Motor neuron (in vitro differentiated cells): ENCODE measurements at regions of chr4 and their contacts with region 1.

Region 1: DNA sequence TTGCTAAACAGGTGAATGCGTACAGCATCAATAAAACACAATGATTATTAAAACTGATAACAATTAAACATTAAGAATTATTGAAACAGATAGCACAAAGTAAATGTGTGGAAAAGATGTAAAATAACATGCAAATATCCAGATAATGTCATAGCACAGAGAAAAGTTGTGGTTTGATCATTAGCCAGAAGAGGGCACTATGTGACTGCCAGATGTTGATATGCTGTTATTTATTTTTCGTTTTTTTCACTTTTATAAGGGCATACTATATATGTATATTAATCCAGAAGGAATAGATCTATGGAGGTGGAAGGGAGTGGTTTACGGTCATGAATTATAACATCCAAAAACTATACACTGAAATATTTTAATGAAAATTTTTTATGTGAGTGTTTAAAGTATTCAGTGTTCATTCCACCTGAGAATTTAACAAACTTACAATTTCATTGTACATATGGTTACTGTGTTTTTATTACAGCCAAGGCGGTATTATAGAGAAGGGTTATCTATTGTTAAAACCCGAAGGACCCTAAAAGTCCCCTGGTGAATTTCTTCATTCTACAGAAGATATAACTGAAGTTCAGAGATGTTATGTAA is 211.9 kb upstream of the UGT8 start:
- ATAC-seq: peak in 4 of 8 experiments; percentile 30 to 55 (median 38)
- H3K4me3 ChIP-seq: no peak overlapping the region
- H3K27ac ChIP-seq: no peak overlapping the region
- H3K4me1 ChIP-seq: no peaks in the 10 kb centered on the region

Region 2: GRCh38 chr4:113781439-113782040 is 605.2 kb before region 1 on chr4:
- in situ Hi-C with region 1: loop called in 3 of 9 experiments (anchors 25 kb)
- ATAC-seq: peak in 3 of 8 experiments; percentile 33 to 42 (median 38)
- H3K4me3 ChIP-seq: no peak overlapping the region
- H3K27ac ChIP-seq: no peak overlapping the region
- H3K4me1 ChIP-seq: no peaks in the 10 kb centered on the region

Region 3: DNA sequence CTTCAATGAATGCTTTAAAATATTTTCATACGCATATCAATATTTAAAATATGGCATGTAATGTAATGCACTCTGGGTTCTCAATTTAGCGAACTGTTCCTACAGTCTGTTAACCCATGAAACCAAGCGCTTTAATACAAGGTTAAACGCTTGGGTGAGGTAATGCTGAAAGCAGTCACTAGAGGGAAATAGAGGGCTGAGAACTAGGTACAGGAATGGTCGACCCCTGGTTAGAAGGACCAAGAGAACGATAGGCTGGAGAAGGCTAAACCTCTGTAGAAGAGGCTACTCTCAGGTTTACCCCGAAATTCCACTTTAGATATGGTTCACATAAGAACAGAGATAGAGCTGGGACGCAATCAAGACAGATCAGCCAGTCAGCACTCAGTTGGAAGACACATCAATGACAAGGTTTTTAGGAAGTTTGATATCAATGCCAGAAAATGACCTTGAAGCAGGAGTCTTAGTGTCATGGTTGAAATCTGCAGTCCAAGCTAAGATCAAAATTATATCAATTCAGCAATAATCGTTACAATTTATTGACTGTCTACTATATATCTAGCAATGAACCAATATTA is 434.2 kb before region 1 on chr4:
- in situ Hi-C with region 1: loop called in 1 of 9 experiments (anchors 25 kb)
- ATAC-seq: peak in 4 of 8 experiments; percentile 40 to 93 (median 62)
- H3K4me3 ChIP-seq: no peak overlapping the region
- H3K27ac ChIP-seq: no peak overlapping the region
- H3K4me1 ChIP-seq: no peaks in the 10 kb centered on the region

Region 4: DNA sequence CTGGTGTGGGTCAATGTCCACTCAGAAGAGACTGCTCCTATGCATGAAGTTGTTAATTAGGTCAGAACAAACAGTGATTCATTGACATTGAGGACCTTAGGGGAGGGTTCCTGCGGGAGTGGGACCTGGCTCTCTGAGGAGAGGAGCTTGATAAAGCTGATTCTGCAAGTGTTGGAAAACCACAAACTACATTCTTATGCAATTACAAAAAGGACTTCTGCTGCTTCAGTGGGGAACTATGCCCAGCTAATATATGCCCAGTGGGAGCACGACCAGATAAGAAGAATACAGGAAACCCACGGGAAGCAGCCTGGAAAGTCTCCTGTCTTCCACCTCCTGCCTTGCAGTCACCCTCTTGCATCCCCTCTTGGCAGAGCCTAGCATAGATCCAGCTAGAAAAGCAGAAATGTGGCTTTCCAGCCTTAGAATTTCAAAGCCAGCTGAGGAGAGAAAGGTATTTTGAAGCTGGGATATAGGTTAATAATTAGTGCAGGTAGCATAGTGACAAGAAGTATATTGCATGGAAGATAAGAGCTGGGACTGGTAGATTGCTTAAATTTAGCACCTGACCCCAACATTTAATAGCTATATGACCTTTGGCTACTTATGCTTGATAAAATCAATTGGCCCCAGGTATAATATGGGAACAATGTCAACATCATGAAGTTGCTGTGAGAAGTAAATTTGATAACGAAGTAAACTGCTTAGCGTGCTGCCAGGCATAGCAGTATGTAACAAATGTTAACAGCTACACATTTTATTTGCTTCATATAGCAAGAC is 177.0 kb after region 1 on chr4:
- in situ Hi-C with region 1: no loop called
- ATAC-seq: peak in 3 of 8 experiments; percentile 78 to 90 (median 89)
- H3K4me3 ChIP-seq: no peak overlapping the region
- H3K27ac ChIP-seq: no peak overlapping the region
- H3K4me1 ChIP-seq: no peaks in the 10 kb centered on the region

Region 5: GRCh38 chr4:114659386-114660008 is 272.8 kb after region 1 on chr4:
- in situ Hi-C with region 1: loop called in 2 of 9 experiments (anchors 25 kb)
- ATAC-seq: peak; percentile 75 to 99 (median 93)
- H3K4me3 ChIP-seq: no peak overlapping the region
- H3K27ac ChIP-seq: no peak overlapping the region
- H3K4me1 ChIP-seq: no peaks in the 10 kb centered on the region

Region 6: GRCh38 chr4:114694770-114695169 is 308.0 kb after region 1 on chr4:
- in situ Hi-C with region 1: loop called in 4 of 9 experiments (anchors 10 to 25 kb)
- ATAC-seq: no peak
- H3K4me3 ChIP-seq: no peak overlapping the region
- H3K27ac ChIP-seq: no peak overlapping the region
- H3K4me1 ChIP-seq: peaks cover 0 to 2% of the 10 kb centered on the region in 2 donors

Region 7: GRCh38 chr4:114780205-114780604 is 393.5 kb after region 1 on chr4:
- in situ Hi-C with region 1: no loop called
- ATAC-seq: peak in 4 of 8 experiments; percentile 52 to 91 (median 66)
- H3K4me3 ChIP-seq: no peak overlapping the region
- H3K27ac ChIP-seq: no peak overlapping the region
- H3K4me1 ChIP-seq: peaks cover 0 to 11% of the 10 kb centered on the region in 2 donors